ENCODE measurements at regions of chr22 and their contacts with region 1.

Region 1: DNA sequence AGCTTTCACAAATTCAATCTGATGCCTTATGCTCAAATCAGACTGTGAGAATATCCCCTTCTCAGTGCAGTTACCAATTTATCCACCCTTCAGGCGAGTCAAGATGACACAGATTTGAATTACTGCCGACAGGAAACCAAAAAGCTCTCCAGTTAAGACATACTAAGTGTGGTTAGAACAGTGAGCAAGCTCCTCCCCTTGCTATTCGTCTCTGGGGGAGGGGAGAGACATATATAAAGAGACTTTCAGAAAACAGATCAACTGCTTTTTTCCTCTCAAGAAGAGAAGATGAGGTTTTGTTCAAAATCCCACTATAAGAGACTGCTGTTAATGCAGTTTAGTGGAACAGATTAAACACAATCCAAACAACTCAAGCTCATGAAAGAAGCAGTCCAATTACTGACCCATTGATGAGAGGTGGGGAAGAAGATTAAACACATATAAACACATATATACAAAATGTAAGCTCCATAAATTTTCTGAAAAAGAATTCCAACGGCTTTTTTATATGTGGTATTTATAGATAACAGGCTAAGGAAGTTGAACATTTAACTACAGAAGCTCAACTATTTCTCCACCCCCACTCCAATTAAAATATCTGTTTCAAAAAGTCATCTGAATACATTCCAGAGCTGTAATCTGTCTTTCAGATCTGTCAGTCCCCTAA is 102.7 kb downstream of the MRTFA start:
- DNase-seq: peak; percentile 65
- H3K4me3 Mint-ChIP-seq: peak overlapping the region; percentile 73
- H3K27ac Mint-ChIP-seq: peak overlapping the region; percentile 73
- H3K4me1 Mint-ChIP-seq: peaks cover 57% of the 10 kb centered on the region
- H3K27me3 Mint-ChIP-seq: no peaks in the 10 kb centered on the region

Region 2: DNA sequence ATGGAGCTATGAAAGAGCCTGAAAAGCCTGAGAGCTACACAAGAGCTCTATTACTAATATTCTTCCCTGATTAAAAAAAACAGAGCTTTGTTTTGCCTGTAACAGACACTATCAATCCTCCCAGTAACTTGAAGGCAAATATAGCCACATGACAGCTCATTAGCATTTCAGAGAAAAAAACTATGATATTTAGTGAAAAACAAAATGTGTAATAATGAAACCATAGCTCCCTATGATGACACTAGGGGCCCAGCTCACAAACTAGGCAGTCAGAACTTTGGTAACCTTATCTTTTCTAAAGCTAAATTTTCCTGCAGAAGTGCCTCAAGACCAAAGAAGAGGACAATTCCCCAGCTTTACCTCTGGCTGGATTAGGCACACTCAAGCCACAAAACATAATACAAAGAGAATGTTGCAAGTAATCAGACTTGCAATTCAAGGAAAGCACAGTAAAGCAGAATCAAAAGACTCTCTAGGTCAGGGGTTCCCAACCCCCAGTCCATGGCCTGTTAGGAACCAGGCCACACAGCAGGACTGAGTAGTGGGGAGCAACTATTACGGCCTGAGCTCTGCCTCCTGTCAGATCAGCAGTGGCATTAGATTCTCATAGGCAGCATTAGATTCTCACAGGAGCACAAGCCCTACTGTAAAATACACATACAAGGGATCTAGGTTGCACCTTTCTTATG is 49.4 kb after region 1 on chr22:
- CTCF ChIA-PET with region 1: interaction called, 11 read pairs
- POLR2A ChIA-PET with region 1: interaction called, 9 read pairs
- DNase-seq: no peak
- H3K4me3 Mint-ChIP-seq: no peak overlapping the region
- H3K27ac Mint-ChIP-seq: peak overlapping the region; percentile 29
- H3K4me1 Mint-ChIP-seq: peaks cover 24% of the 10 kb centered on the region
- H3K27me3 Mint-ChIP-seq: no peaks in the 10 kb centered on the region

Measured in activated CD4-positive, alpha-beta memory T cell treated with anti-CD3 and anti-CD28 coated beads, Interleukin-2, amount 10 ng/mL, durations not matched to agents 7 days and 5 days (primary cell).